Activated naive CD4-positive, alpha-beta T cell treated with anti-CD3 and anti-CD28 coated beads, Interleukin-2, amount 10 ng/mL, durations not matched to agents 7 days and 5 days (primary cell): ENCODE measurements at regions of chr7 and their contacts with region 1.

Region 1: GRCh38 chr7:95476904-95477594 is 8.7 kb upstream of the ASB4 start:
- DNase-seq: peak; percentile 66
- H3K4me3 Mint-ChIP-seq: no peak overlapping the region
- H3K27ac Mint-ChIP-seq: no peak overlapping the region
- H3K4me1 Mint-ChIP-seq: no peaks in the 10 kb centered on the region
- H3K27me3 Mint-ChIP-seq: peaks cover 4% of the 10 kb centered on the region

Region 2: DNA sequence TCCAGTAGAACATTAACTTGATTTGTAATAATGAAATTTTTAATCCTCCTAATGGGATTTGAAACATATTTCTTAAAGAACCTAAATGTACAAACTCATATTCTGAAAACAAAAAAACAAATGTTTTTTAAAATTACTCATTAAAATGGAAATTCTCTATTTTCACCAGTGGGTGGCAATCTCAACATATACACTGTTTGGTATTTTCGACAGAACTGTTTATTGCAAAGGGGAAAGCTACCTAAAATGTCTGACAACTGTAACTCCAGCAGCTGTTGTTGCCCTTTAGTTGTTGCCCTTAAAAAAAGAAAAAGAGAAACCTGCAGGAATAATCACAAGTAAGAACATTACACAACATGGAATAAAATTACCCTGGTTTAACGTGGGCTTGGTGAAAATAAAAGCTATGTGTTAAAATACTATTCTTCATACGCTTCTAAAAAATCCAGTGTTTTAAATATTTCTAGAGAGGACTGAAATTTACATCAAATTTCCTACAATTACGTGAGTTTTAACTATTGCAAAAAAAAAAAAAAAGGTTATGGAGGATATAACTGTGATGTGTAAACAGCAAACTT is 1027.8 kb before region 1 on chr7:
- CTCF ChIA-PET with region 1: interaction called, 26 read pairs
- DNase-seq: no peak
- H3K4me3 Mint-ChIP-seq: no peak overlapping the region
- H3K27ac Mint-ChIP-seq: no peak overlapping the region
- H3K4me1 Mint-ChIP-seq: no peaks in the 10 kb centered on the region
- H3K27me3 Mint-ChIP-seq: peaks cover 3% of the 10 kb centered on the region

Region 3: GRCh38 chr7:95396136-95397032 is 80.7 kb before region 1 on chr7 and contains the start of gene PON3:
- CTCF ChIA-PET with region 1: interaction called, 19 read pairs
- DNase-seq: peak; percentile 27
- H3K4me3 Mint-ChIP-seq: peak within 1 kb of the TSS; percentile 61
- H3K27ac Mint-ChIP-seq: no peak within 1 kb of the TSS
- H3K4me1 Mint-ChIP-seq: no peaks in the 10 kb centered on the region
- H3K27me3 Mint-ChIP-seq: peaks cover 35% of the 10 kb centered on the region

Region 4: DNA sequence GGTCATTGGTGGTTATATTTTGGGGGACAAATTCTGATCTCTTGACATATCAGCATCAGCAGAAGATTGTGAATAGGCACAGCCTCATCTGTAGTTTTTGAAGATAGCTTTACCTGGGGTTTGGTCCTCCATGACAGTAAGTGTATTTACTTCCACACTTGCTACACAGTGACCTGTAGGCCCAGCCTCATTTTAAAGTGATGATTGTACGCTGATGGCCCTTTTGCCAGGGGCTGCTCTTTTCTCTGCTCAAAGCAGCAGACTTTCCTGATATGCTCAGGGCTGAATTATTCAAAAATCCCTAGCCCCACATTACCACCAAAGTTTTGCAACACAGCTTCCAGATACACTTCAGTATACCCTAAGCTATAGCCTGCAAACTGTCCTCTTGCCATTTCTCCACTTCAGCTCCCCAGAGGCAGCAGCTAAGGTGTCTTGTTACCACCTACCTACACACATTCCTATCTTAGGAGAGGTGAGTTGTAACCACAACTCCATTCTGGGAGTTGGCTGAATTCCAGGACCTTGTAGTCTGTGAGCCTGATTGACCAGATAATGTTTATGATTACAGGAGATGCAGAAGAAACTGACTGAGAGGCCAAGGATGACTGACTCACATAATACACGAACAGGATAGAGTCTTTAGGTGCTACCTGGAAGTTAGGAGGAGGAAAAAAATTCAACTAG is 14.7 kb after region 1 on chr7:
- CTCF ChIA-PET with region 1: interaction called, 32 read pairs
- DNase-seq: no peak
- H3K4me3 Mint-ChIP-seq: no peak overlapping the region
- H3K27ac Mint-ChIP-seq: no peak overlapping the region
- H3K4me1 Mint-ChIP-seq: no peaks in the 10 kb centered on the region
- H3K27me3 Mint-ChIP-seq: peaks cover 17% of the 10 kb centered on the region

Region 5: DNA sequence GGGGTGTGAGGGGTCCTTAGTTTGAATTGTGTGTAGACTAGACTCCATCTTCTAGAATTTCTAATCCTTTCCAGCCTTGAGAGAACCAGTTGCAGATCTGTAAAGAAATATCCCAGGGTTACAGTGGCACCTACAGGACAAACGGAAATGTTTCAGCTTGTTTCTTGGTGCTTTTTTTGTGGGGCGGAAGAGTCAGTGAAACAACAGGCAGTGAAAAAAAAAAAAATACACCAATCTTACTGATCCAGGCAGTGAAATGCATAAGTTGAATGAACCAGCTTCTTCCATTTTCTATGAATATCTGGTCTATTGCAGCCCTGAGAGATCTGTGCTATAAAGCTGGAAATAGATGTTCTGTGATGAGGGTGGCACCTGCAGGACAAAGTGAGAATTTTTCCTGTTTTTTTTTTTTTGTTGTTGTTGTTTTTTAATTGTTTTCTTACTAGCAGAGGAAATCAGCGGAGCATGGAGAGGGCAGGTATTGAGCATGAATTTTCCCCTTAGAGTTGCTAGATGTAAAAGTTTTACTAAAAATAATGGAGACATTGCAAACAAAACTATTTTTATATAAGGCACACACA is 213.4 kb after region 1 on chr7:
- CTCF ChIA-PET with region 1: interaction called, 16 read pairs
- DNase-seq: no peak
- H3K4me3 Mint-ChIP-seq: no peak overlapping the region
- H3K27ac Mint-ChIP-seq: no peak overlapping the region
- H3K4me1 Mint-ChIP-seq: no peaks in the 10 kb centered on the region
- H3K27me3 Mint-ChIP-seq: peaks cover 4% of the 10 kb centered on the region